T-cell (primary cell): ENCODE measurements at regions of chr7 and their contacts with region 1.

Region 1: DNA sequence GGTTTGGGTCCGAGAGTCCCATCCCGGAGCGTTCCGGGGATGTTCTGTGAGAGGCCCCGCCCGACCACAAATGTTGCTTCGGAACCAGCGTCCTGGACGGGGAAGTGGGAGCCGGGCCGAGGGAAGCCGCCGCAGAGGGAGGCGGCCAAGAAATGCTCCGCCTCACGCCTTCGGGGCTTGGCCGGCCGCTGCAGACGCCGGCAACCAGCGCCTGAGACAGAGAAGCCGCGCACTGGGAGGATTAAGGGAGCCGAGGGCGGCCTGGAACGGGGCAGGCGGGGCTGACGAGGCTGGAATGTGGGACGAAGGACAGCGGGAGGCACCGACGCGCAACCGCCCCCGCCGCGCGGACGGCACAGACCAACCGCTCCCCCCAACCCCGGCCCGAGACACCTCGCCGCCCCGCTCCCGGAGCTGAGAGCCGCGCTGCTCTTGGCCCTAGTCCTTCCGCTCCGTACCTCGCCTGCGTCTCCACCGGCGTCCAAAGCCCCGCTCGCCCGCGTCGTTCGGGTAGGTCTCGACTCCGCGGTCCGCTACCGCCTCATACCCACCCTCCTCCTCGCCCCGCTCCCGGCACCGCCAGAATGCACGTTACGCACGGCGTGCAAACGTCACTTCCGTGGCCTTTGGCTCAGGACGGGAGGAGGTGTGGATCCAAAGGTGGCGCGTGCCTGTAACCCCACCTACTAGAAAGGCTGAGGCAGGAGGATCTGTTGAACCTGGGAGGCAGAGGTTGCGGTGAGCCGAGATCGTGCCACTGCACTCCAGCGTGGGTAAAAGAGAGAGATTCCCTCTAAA is 36.7 kb upstream of the KCTD7 start:
- DNase-seq: peak; percentile 76 to 96 (median 89)
- ATAC-seq: peak; percentile 99 to 100 (median 99)
- H3K4me3 ChIP-seq: peak overlapping the region; percentile 70 to 79
- H3K4me3 Mint-ChIP-seq: peak overlapping the region; percentile 92 to 97 (median 96)
- H3K27ac ChIP-seq: peak overlapping the region; percentile 83
- H3K27ac Mint-ChIP-seq: peak overlapping the region; percentile 88 to 96
- H3K4me1 ChIP-seq: peaks cover 8 to 37% of the 10 kb centered on the region in 2 experiments
- H3K4me1 Mint-ChIP-seq: peaks cover 41 to 60% (median 59%) of the 10 kb centered on the region in 3 donors
- H3K27me3 ChIP-seq: no peaks in the 10 kb centered on the region
- H3K27me3 Mint-ChIP-seq: no peaks in the 10 kb centered on the region

Region 2: DNA sequence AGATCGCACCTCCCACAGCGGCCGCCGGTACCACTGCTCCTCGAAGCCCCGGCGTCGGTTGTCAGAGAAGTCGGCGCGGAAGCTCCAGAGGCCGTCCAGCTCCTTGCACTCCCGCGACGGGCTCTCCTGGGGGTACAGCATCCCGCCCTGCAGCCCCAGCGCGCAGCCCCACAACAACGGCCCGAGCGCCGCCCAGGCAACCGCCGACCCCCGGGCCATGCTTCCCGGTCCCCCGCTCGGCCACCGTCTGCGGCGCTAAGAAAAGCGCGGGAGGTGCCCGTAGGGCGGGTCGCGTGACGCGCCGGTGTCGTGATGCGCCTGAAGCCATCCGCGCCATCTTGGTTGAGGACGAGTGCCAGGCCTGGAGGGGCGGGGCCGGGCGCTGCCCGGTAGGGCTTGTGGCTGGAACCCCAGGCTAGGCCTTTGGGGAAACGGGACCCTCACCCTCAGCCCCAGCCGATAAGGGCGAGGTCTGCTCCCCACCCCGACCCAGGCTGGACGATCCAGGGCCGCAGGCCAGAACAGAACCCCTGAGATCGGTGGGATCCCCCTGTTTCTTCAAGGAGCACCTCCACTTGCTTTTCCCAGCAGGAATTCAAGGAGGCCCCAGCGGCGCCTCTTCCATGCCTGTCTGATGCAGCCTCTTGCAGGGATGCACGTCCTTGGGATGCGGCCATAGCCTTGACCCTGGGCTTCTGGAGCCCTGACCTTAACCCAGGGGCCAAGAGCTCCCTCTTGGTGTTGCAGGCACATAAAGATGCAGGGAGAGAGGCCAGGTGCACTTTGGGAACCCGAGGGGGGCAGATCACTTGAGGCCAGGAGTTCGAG is 609.8 kb before region 1 on chr7 and contains the start of gene GUSB:
- CTCF ChIA-PET with region 1: no interaction called
- POLR2A ChIA-PET with region 1: interaction called in 1 of 2 experiments, 11 read pairs
- DNase-seq: peak; percentile 69 to 91 (median 85)
- ATAC-seq: peak; percentile 95 to 96 (median 95)
- H3K4me3 ChIP-seq: peak within 1 kb of the TSS; percentile 65 to 85
- H3K4me3 Mint-ChIP-seq: peak within 1 kb of the TSS; percentile 72 to 81 (median 76)
- H3K27ac ChIP-seq: peak within 1 kb of the TSS; percentile 74
- H3K27ac Mint-ChIP-seq: peak within 1 kb of the TSS in 1 of 2 donors; percentile 68
- H3K4me1 ChIP-seq: peaks cover 8 to 26% of the 10 kb centered on the region in 2 experiments
- H3K4me1 Mint-ChIP-seq: peaks cover 11 to 19% (median 14%) of the 10 kb centered on the region in 3 donors
- H3K27me3 ChIP-seq: no peaks in the 10 kb centered on the region
- H3K27me3 Mint-ChIP-seq: no peaks in the 10 kb centered on the region
- total RNA-seq, gene GUSB: 35.3 to 56.7 (median 52.3) TPM

Region 3: GRCh38 chr7:66564045-66564444 is 28.0 kb before region 1 on chr7:
- CTCF ChIA-PET with region 1: no interaction called
- POLR2A ChIA-PET with region 1: no interaction called
- DNase-seq: no peak
- ATAC-seq: no peak
- H3K4me3 ChIP-seq: no peak overlapping the region
- H3K4me3 Mint-ChIP-seq: no peak overlapping the region
- H3K27ac ChIP-seq: no peak overlapping the region
- H3K27ac Mint-ChIP-seq: peak overlapping the region in 1 of 2 donors; percentile 20
- H3K4me1 ChIP-seq: no peaks in the 10 kb centered on the region
- H3K4me1 Mint-ChIP-seq: peaks cover 3 to 13% (median 5%) of the 10 kb centered on the region in 3 donors
- H3K27me3 ChIP-seq: no peaks in the 10 kb centered on the region
- H3K27me3 Mint-ChIP-seq: no peaks in the 10 kb centered on the region

Region 4: GRCh38 chr7:66681491-66682349 is 89.7 kb after region 1 on chr7:
- CTCF ChIA-PET with region 1: no interaction called
- POLR2A ChIA-PET with region 1: interaction called, 7 to 12 read pairs
- DNase-seq: peak; percentile 89 to 98 (median 96)
- ATAC-seq: peak; percentile 97 to 100 (median 99)
- H3K4me3 ChIP-seq: peak overlapping the region; percentile 85 to 95
- H3K4me3 Mint-ChIP-seq: peak overlapping the region; percentile 87 to 93 (median 90)
- H3K27ac ChIP-seq: peak overlapping the region; percentile 99
- H3K27ac Mint-ChIP-seq: peak overlapping the region; percentile 88 to 89
- H3K4me1 ChIP-seq: peaks cover 2 to 28% of the 10 kb centered on the region in 2 experiments
- H3K4me1 Mint-ChIP-seq: peaks cover 32 to 41% (median 41%) of the 10 kb centered on the region in 3 donors
- H3K27me3 ChIP-seq: no peaks in the 10 kb centered on the region
- H3K27me3 Mint-ChIP-seq: no peaks in the 10 kb centered on the region

Region 5: GRCh38 chr7:66699998-66700397 is 108.0 kb after region 1 on chr7:
- CTCF ChIA-PET with region 1: no interaction called
- POLR2A ChIA-PET with region 1: no interaction called
- DNase-seq: no peak
- ATAC-seq: no peak
- H3K4me3 ChIP-seq: no peak overlapping the region
- H3K4me3 Mint-ChIP-seq: no peak overlapping the region
- H3K27ac ChIP-seq: no peak overlapping the region
- H3K27ac Mint-ChIP-seq: no peak overlapping the region
- H3K4me1 ChIP-seq: no peaks in the 10 kb centered on the region
- H3K4me1 Mint-ChIP-seq: peaks cover 0 to 1% (median 0%) of the 10 kb centered on the region in 3 donors
- H3K27me3 ChIP-seq: no peaks in the 10 kb centered on the region
- H3K27me3 Mint-ChIP-seq: no peaks in the 10 kb centered on the region

Region 6: DNA sequence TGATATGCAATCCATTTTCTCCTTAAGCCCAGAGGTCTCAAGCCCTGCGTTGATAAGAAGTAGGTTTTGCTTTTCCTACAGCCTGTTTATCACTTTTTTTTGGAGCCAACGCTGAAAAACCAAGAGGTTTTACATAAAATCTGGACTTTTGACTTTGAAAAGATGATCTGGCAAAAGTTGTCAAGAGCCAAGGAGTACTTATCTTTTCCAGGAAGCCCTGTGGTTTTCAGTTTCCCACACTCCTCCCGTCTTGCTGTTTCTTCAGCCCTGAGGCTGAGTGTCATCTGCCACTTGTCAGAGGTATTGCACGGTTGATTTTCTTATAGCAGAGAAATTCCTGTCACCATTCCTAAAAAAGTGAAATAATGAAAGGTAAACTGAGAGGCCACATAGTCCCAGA is 513.4 kb after region 1 on chr7:
- CTCF ChIA-PET with region 1: no interaction called
- POLR2A ChIA-PET with region 1: no interaction called
- DNase-seq: peak in 1 of 35 experiments; percentile 6
- ATAC-seq: no peak
- H3K4me3 ChIP-seq: no peak overlapping the region
- H3K4me3 Mint-ChIP-seq: peak overlapping the region in 1 of 3 donors; percentile 42
- H3K27ac ChIP-seq: no peak overlapping the region
- H3K27ac Mint-ChIP-seq: peak overlapping the region; percentile 20 to 76
- H3K4me1 ChIP-seq: peaks cover 0 to 6% of the 10 kb centered on the region in 2 experiments
- H3K4me1 Mint-ChIP-seq: peaks cover 14 to 21% (median 19%) of the 10 kb centered on the region in 3 donors
- H3K27me3 ChIP-seq: no peaks in the 10 kb centered on the region
- H3K27me3 Mint-ChIP-seq: no peaks in the 10 kb centered on the region